Activated CD4-positive, alpha-beta T cell treated with anti-CD3 and anti-CD28 coated beads, Interleukin-2, amount 10 ng/mL, durations not matched to agents 7 days and 5 days (primary cell): ENCODE measurements at regions of chr2 and their contacts with region 1.

Region 1: GRCh38 chr2:181111059-181111458 is 130.7 kb downstream of the UBE2E3 start:
- DNase-seq: no peak
- H3K4me3 Mint-ChIP-seq: no peak overlapping the region
- H3K27ac Mint-ChIP-seq: no peak overlapping the region
- H3K4me1 Mint-ChIP-seq: peaks cover 43% of the 10 kb centered on the region
- H3K27me3 Mint-ChIP-seq: no peaks in the 10 kb centered on the region

Region 2: GRCh38 chr2:181121996-181122395 is 10.9 kb after region 1 on chr2:
- CTCF ChIA-PET with region 1: interaction called, 10 read pairs
- POLR2A ChIA-PET with region 1: no interaction called
- DNase-seq: no peak
- H3K4me3 Mint-ChIP-seq: no peak overlapping the region
- H3K27ac Mint-ChIP-seq: no peak overlapping the region
- H3K4me1 Mint-ChIP-seq: peaks cover 59% of the 10 kb centered on the region
- H3K27me3 Mint-ChIP-seq: no peaks in the 10 kb centered on the region